Ovary (tissue), 10 donors: ENCODE measurements at regions of chr15 and their contacts with region 1.

Region 1: GRCh38 chr15:74307827-74308644 is 59.4 kb downstream of the CYP11A1 start:
- DNase-seq: peak; percentile 57 to 73 (median 70)
- H3K4me3 ChIP-seq: no peak overlapping the region
- H3K27ac ChIP-seq: no peak overlapping the region
- H3K4me1 ChIP-seq: no peaks in the 10 kb centered on the region
- H3K27me3 ChIP-seq: no peaks in the 10 kb centered on the region
- CTCF ChIP-seq: peak; percentile 36 to 56 (median 54)
- EP300 ChIP-seq: no peak
- POLR2A ChIP-seq: no peak

Region 2: GRCh38 chr15:73950831-73951561 is 357.0 kb before region 1 on chr15:
- intact Hi-C with region 1: loop called in 2 of 4 experiments (anchors 10 kb)
- DNase-seq: peak; percentile 95 to 97 (median 96)
- H3K4me3 ChIP-seq: no peak overlapping the region
- H3K27ac ChIP-seq: peak overlapping the region; percentile 68 to 97
- H3K4me1 ChIP-seq: peaks cover 12% of the 10 kb centered on the region
- H3K27me3 ChIP-seq: no peaks in the 10 kb centered on the region
- CTCF ChIP-seq: peak; percentile 83 to 94 (median 88)
- EP300 ChIP-seq: peak; percentile 65
- POLR2A ChIP-seq: no peak

Region 3: DNA sequence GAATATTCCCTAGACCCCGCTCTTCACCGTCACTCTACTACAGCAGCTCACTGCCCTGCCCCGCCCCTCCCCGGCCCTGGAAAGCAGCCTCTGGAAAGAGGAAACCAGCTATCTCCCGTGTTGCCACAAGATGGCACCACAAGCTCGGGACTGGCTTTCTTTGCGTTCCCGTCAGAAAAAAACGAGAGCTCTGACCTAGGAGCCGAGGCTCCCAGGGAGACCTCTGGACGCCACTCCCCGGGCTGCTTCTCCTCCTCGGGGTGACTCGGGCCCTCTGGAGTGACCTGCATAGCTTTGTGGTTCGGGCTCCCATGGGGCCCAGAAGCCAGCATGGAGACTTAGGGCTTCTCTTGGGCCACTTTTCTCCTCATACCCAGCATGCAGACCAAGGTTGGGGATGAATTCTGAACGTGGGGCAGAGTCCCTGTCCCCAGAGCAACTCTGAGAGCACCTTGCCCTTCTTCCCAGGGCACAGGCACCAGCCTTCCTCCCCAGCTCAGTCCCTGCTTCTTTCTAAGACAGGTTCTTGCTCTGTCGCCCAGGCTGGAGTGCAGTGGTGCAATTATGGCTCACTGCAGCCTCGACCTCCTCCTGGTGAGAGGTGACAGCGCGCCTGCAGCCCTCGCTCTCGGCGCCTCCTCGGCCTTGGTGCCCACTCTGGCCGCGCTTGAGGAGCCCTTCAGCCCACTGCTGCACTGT is 334.9 kb before region 1 on chr15:
- intact Hi-C with region 1: loop called in 1 of 4 experiments (anchors 10 kb)
- DNase-seq: peak; percentile 78 to 90 (median 86)
- H3K4me3 ChIP-seq: no peak overlapping the region
- H3K27ac ChIP-seq: no peak overlapping the region
- H3K4me1 ChIP-seq: no peaks in the 10 kb centered on the region
- H3K27me3 ChIP-seq: no peaks in the 10 kb centered on the region
- CTCF ChIP-seq: peak; percentile 57 to 88 (median 83)
- EP300 ChIP-seq: no peak
- POLR2A ChIP-seq: no peak

Region 4: DNA sequence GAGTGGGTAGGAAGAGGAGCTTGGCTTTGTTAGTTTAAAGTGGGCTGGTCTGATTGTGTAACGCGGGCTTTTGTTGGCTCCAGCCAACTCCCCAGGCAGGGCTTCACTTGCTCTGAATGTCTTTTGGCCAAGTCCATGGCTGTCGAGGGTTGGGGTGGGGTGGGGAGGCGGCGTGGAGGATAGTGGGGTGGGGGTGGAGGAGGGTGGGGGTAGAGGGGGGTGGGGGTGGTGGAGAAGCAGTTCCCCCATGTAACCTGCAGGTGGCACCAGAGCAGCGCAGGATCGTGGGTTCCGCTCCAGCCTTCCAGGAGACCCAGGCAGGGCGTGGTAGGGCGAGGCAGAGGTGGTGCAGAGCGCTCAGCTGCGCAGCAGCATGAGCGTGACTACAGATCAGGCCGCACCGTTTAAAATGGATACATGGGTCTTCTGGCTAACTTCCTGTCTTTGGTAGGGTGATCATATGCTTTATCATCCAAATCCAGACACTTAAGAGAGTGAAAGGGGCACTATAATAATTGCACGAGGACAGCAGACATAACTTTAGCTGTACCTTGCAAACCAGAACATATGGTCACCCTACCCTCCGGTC is 254.0 kb before region 1 on chr15:
- intact Hi-C with region 1: loop called in 1 of 4 experiments (anchors 10 kb)
- DNase-seq: peak; percentile 78 to 85 (median 81)
- H3K4me3 ChIP-seq: no peak overlapping the region
- H3K27ac ChIP-seq: no peak overlapping the region
- H3K4me1 ChIP-seq: peaks cover 17% of the 10 kb centered on the region
- H3K27me3 ChIP-seq: no peaks in the 10 kb centered on the region
- CTCF ChIP-seq: peak in 2 of 3 donors; percentile 18 to 39
- EP300 ChIP-seq: no peak
- POLR2A ChIP-seq: no peak

Region 5: GRCh38 chr15:74127260-74127953 is 180.6 kb before region 1 on chr15:
- intact Hi-C with region 1: loop called (anchors 2 to 5 kb)
- DNase-seq: peak; percentile 84 to 94 (median 92)
- H3K4me3 ChIP-seq: peak overlapping the region; percentile 26
- H3K27ac ChIP-seq: no peak overlapping the region
- H3K4me1 ChIP-seq: peaks cover 8% of the 10 kb centered on the region
- H3K27me3 ChIP-seq: no peaks in the 10 kb centered on the region
- CTCF ChIP-seq: peak; percentile 93 to 99 (median 99)
- EP300 ChIP-seq: no peak
- POLR2A ChIP-seq: no peak

Region 6: DNA sequence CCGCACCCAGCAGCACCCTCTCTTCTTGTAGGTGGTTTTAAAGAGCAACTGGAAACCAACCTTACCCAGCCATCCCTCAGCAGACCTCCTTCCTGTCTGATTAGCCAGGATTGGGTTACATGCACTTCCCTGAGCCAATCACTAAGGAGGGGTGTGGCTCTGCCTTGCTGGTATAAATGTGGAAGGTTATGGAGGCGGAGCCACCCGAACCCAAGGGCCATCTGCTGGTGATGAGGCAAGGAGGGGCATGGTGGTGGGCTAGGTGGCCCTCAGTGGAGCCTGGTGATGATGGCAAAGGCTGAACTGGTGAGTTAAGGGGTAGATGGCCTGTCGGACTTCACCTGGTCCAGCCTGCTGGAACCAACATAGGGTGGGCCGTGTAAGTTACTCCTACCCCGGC is 32.1 kb before region 1 on chr15:
- intact Hi-C with region 1: no loop called
- DNase-seq: no peak
- H3K4me3 ChIP-seq: no peak overlapping the region
- H3K27ac ChIP-seq: no peak overlapping the region
- H3K4me1 ChIP-seq: no peaks in the 10 kb centered on the region
- H3K27me3 ChIP-seq: no peaks in the 10 kb centered on the region
- CTCF ChIP-seq: no peak
- EP300 ChIP-seq: no peak
- POLR2A ChIP-seq: no peak

Region 7: DNA sequence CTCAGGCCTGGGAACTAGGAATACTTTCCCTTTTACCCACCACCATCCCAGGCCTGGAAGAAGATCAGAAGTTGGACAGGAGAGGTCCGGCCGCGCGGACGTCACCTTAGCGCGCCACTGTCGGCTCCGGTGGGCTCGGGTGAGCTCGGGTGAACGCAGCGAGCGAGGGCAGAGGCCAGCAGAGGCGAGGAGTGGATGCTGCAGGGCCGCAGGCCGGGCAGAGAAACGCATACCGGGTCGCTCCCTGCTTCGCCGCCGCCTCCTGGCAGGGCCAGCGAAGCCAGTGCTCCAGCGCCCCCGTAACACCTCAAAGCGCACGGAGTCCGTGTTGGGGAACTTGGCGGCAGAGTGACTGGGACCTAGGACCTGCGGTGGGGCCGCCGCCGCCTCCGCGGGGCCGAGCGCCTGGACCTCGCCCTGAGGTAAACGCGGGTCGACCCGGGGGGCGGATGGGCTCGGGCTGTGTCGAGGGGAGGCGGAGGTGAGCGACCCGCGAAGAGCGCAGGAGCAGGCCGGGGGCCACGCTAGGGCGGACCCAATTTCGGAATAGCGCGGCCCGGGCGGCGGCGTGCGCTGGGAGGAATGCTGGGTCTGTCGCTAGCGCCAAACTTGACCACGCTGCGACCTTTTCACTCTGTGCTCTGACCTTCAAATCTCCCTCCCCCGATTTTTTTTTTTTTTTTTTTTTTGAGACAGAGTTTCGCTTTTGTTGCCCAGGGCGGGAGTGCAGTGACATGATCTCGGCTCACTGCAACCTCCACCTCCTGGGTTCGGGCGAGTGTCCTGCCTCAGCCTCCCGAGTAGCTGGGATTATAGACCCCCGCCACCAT is 57.8 kb after region 1 on chr15:
- intact Hi-C with region 1: no loop called
- DNase-seq: peak; percentile 73 to 88 (median 75)
- H3K4me3 ChIP-seq: peak overlapping the region; percentile 80
- H3K27ac ChIP-seq: peak overlapping the region; percentile 90 to 96
- H3K4me1 ChIP-seq: peaks cover 14% of the 10 kb centered on the region
- H3K27me3 ChIP-seq: no peaks in the 10 kb centered on the region
- CTCF ChIP-seq: no peak
- EP300 ChIP-seq: no peak
- POLR2A ChIP-seq: peak; percentile 39